CD4-positive, alpha-beta T cell (primary cell): ENCODE measurements at regions of chr16 and their contacts with region 1.

Region 1: DNA sequence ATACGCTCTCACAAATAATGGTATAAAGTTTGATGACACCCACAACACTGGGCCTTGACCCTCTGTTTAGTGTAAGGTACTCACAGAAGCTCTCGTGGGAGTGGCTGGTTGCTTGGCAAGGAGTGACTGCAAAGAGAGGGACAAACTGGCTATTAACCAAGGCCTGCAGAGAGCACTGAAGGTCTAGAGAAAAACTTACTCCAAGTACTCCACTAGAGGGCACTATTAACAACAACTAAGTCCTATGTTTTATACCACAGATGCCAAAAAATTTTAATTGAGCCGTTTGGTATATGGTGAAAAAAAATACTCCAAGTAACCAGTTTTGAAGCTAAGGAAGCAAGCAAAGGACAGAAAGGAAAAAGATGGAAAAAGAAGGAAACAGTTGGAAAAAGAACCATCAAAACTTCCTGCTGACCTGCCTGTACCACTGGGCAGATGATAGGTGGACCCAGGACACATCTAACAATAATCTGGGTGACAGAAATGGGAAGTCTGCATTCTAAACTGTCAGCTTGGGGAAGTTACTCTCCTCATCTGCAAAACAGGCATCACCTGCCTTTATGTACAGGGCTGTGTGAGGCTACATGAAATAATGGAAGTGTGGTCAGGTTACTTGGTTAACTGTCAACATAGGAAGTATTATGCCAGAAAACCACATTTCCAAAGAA is 23.2 kb downstream of the DYNC1LI2 start:
- DNase-seq: peak in 4 of 14 experiments; percentile 11 to 68 (median 60)
- ATAC-seq: peak; percentile 87
- H3K4me3 ChIP-seq: no peak overlapping the region
- H3K4me3 Mint-ChIP-seq: no peak overlapping the region
- H3K27ac ChIP-seq: no peak overlapping the region
- H3K27ac Mint-ChIP-seq: peak overlapping the region; percentile 5
- H3K4me1 ChIP-seq: no peaks in the 10 kb centered on the region
- H3K4me1 Mint-ChIP-seq: peaks cover 6% of the 10 kb centered on the region
- H3K27me3 ChIP-seq: no peaks in the 10 kb centered on the region
- H3K27me3 Mint-ChIP-seq: no peaks in the 10 kb centered on the region
- CTCF ChIP-seq: peak; percentile 83

Region 2: DNA sequence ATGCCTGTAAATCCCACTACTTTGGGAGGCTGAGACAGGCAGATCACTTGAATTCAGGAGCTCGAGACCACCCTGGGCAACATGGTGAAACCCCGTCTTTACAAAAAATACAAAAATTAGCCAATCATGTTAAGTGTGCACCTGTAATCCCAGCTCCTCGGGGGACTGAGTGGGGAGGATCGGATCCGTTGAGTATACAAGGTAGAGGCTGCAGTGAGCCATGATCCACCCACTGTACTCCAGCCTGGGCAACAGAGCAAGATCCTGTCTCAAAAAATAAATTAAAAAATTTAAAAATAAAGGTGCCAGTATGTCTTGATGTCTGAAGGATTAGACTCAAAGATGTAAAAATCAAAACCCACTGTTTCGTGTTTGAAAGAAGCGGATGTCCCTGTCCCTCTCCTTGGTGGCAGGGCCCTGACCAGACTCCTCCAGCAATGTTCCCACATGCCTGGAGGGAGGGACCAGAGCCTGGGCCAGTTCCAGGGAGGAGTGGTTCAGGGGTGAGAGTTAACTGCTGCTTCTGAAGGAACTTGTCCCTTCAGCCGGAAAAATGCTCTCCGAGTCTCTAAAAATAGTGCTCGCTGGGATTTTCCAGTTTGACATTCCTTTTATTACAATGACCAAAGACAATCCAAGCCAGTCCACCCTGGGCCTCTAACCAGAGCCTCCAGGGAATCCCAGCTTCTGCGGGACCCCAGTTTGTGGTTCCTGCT is 22.3 kb before region 1 on chr16:
- CTCF ChIA-PET with region 1: no interaction called
- POLR2A ChIA-PET with region 1: no interaction called
- intact Hi-C with region 1: no loop called
- DNase-seq: no peak
- ATAC-seq: no peak
- H3K4me3 ChIP-seq: no peak overlapping the region
- H3K4me3 Mint-ChIP-seq: no peak overlapping the region
- H3K27ac ChIP-seq: no peak overlapping the region
- H3K27ac Mint-ChIP-seq: no peak overlapping the region
- H3K4me1 ChIP-seq: no peaks in the 10 kb centered on the region
- H3K4me1 Mint-ChIP-seq: no peaks in the 10 kb centered on the region
- H3K27me3 ChIP-seq: no peaks in the 10 kb centered on the region
- H3K27me3 Mint-ChIP-seq: peaks cover 15% of the 10 kb centered on the region
- CTCF ChIP-seq: no peak

Region 3: DNA sequence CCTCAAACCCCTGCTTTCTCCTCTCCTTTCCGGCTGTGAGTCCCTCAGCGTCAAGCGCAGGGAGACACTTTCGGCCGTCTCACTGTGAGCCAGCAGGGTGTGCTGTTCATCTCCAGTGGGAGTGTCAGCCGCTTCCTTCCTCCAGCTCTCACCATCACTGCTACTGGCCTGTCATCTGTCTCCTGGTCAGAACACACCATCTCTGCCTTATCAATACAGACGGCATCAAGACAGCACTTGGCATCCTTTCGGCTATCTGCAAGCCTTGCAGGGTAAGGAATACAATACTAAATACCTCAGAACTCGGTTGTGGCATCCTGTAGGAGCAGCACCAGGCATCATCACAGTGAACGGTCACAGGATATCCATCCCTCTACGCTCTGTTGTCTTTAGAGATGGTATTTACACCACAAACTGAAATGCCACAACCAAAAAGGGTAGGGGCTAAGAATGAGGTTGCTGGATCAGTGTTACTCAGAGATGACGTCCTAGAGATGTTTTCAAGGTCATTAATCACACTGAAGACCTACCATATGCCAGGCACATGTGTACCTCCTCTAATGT is 11.1 kb before region 1 on chr16:
- CTCF ChIA-PET with region 1: no interaction called
- POLR2A ChIA-PET with region 1: no interaction called
- intact Hi-C with region 1: no loop called
- DNase-seq: peak in 3 of 14 experiments; percentile 9 to 27 (median 25)
- ATAC-seq: no peak
- H3K4me3 ChIP-seq: no peak overlapping the region
- H3K4me3 Mint-ChIP-seq: no peak overlapping the region
- H3K27ac ChIP-seq: no peak overlapping the region
- H3K27ac Mint-ChIP-seq: no peak overlapping the region
- H3K4me1 ChIP-seq: no peaks in the 10 kb centered on the region
- H3K4me1 Mint-ChIP-seq: no peaks in the 10 kb centered on the region
- H3K27me3 ChIP-seq: no peaks in the 10 kb centered on the region
- H3K27me3 Mint-ChIP-seq: peaks cover 5% of the 10 kb centered on the region
- CTCF ChIP-seq: no peak

Region 4: GRCh38 chr16:66740010-66740409 is 11.8 kb after region 1 on chr16:
- CTCF ChIA-PET with region 1: interaction called, 18 read pairs
- POLR2A ChIA-PET with region 1: no interaction called
- intact Hi-C with region 1: loop called in 1 of 2 experiments (anchors 1 kb)
- DNase-seq: peak in 8 of 14 experiments; percentile 5 to 67 (median 18)
- ATAC-seq: peak; percentile 64
- H3K4me3 ChIP-seq: no peak overlapping the region
- H3K4me3 Mint-ChIP-seq: no peak overlapping the region
- H3K27ac ChIP-seq: no peak overlapping the region
- H3K27ac Mint-ChIP-seq: peak overlapping the region; percentile 45
- H3K4me1 ChIP-seq: peaks cover 17% of the 10 kb centered on the region
- H3K4me1 Mint-ChIP-seq: peaks cover 24% of the 10 kb centered on the region
- H3K27me3 ChIP-seq: no peaks in the 10 kb centered on the region
- H3K27me3 Mint-ChIP-seq: no peaks in the 10 kb centered on the region
- CTCF ChIP-seq: peak; percentile 70

Region 5: DNA sequence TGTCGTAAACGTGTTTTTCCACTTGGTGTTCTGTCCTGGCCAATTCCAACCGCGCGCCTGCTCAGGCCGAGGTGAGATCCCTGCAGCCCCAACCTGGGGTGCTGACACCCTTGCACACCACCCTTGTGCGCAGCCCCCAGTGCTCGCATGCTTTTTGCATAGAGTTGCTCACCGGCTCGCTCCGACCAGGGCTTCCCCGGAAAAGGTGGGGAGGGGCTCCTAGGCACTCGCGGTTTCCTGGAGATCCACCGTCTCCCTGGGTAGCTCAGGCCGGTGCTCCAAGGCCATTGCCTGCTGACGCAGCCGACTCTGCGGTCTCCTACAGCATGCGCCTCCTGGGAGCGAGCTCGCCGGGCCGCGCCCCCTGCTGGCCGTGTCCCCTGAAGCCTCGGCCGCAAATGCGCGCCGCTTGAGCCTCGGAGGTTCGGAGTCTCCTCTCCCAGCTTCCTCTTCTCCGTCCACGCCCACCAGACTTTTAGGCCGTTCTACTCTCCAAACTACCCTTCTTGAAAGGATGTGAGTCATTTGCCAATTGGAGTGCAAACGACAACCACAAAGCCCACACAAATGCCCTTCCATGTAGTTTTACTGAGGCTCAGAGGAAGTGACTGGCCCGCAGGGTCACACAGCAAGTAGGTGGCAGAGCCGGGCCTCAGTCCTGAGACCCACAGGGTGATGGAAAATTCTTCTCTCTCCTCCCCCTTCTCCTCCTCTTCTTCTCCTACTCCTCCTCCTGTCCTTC is 144.9 kb after region 1 on chr16:
- CTCF ChIA-PET with region 1: no interaction called
- POLR2A ChIA-PET with region 1: no interaction called
- intact Hi-C with region 1: loop called in 1 of 2 experiments (anchors 5 kb)
- DNase-seq: peak; percentile 75 to 94 (median 82)
- ATAC-seq: peak; percentile 90
- H3K4me3 ChIP-seq: peak overlapping the region; percentile 57
- H3K4me3 Mint-ChIP-seq: peak overlapping the region; percentile 75
- H3K27ac ChIP-seq: peak overlapping the region in 1 of 2 donors; percentile 24
- H3K27ac Mint-ChIP-seq: peak overlapping the region; percentile 32
- H3K4me1 ChIP-seq: peaks cover 26% of the 10 kb centered on the region
- H3K4me1 Mint-ChIP-seq: peaks cover 21% of the 10 kb centered on the region
- H3K27me3 ChIP-seq: no peaks in the 10 kb centered on the region
- H3K27me3 Mint-ChIP-seq: no peaks in the 10 kb centered on the region
- CTCF ChIP-seq: peak; percentile 92